ENCODE measurements at regions of chr10 and their contacts with region 1.

Region 1: GRCh38 chr10:92965314-92965713 is 95.3 kb upstream of the CYP26C1 start:
- DNase-seq: no peak
- H3K4me3 ChIP-seq: no peak overlapping the region
- H3K27ac ChIP-seq: no peak overlapping the region
- H3K27me3 ChIP-seq: no peaks in the 10 kb centered on the region
- CTCF ChIP-seq: peak; percentile 64

Region 2: DNA sequence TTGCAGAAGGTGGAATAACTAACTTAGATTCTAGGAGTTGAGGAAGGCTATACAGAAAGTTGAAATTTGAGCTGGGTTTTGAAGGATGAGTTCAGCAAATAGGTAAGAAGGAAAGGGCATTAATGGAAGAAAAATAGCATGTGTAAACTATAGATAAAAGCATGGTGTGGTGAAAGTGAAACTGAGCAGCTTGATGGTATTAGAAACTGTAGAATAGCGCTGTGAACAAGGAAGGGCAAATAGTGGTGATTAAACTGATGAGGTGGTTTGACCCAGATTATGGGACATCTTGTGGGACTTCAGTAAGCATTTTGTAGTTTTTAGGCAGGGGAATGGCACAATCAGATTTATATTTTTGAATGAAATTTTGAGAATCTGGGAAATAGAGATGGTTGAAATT is 26.5 kb before region 1 on chr10:
- CTCF ChIA-PET with region 1: interaction called, 13 read pairs
- POLR2A ChIA-PET with region 1: no interaction called
- DNase-seq: no peak
- H3K4me3 ChIP-seq: no peak overlapping the region
- H3K27ac ChIP-seq: no peak overlapping the region
- H3K27me3 ChIP-seq: no peaks in the 10 kb centered on the region
- CTCF ChIP-seq: no peak

Region 3: DNA sequence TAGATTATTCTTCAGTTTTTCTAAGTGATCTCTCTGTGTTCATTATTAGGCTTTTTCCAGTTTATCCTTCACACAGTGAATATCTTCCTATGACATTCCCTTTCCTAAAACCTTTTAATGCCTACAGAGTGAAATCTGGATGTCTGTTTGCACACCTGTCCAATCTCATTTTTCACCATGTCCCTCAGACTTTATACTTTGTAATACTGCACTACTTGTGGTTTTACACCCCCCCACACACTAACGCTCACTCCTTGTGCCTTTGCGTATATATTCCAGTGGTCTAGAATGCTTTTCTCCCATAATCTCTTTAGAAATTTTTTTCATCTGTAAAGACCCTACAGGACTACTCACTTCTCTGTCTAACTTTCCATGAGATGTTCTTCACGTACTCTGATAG is 18.8 kb before region 1 on chr10:
- CTCF ChIA-PET with region 1: interaction called, 18 read pairs
- POLR2A ChIA-PET with region 1: no interaction called
- DNase-seq: no peak
- H3K4me3 ChIP-seq: no peak overlapping the region
- H3K27ac ChIP-seq: no peak overlapping the region
- H3K27me3 ChIP-seq: no peaks in the 10 kb centered on the region
- CTCF ChIP-seq: no peak

Region 4: GRCh38 chr10:92993699-92994272 is 28.5 kb after region 1 on chr10:
- CTCF ChIA-PET with region 1: interaction called, 10 read pairs
- POLR2A ChIA-PET with region 1: interaction called, 3 read pairs
- DNase-seq: no peak
- H3K4me3 ChIP-seq: no peak overlapping the region
- H3K27ac ChIP-seq: no peak overlapping the region
- H3K27me3 ChIP-seq: no peaks in the 10 kb centered on the region
- CTCF ChIP-seq: no peak

Region 5: DNA sequence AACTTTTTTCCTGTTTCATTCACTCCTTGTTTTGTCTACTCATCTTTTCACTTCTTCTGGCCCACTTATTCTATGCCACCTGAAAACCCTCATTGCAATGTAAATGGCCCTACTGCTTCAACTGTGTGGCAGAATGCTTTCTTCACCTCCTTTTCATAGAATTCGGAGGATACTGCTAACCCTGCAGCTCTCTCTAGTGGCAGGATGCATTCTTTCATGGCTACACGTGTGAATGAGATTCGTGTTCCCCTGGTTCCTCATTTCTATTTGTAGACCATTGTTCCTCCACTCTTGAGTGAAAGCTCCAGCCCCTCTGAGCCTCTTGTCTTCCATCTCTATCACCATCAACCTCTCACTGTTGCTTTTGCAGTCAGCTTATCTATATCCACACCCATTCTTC is 74.4 kb after region 1 on chr10:
- CTCF ChIA-PET with region 1: interaction called, 14 read pairs
- POLR2A ChIA-PET with region 1: no interaction called
- DNase-seq: no peak
- H3K4me3 ChIP-seq: no peak overlapping the region
- H3K27ac ChIP-seq: no peak overlapping the region
- H3K27me3 ChIP-seq: no peaks in the 10 kb centered on the region
- CTCF ChIP-seq: peak; percentile 70

Measured in AG04450 (cell line).